Mammary epithelial cell (primary cell): ENCODE measurements at regions of chr9 and their contacts with region 1.

Region 1: DNA sequence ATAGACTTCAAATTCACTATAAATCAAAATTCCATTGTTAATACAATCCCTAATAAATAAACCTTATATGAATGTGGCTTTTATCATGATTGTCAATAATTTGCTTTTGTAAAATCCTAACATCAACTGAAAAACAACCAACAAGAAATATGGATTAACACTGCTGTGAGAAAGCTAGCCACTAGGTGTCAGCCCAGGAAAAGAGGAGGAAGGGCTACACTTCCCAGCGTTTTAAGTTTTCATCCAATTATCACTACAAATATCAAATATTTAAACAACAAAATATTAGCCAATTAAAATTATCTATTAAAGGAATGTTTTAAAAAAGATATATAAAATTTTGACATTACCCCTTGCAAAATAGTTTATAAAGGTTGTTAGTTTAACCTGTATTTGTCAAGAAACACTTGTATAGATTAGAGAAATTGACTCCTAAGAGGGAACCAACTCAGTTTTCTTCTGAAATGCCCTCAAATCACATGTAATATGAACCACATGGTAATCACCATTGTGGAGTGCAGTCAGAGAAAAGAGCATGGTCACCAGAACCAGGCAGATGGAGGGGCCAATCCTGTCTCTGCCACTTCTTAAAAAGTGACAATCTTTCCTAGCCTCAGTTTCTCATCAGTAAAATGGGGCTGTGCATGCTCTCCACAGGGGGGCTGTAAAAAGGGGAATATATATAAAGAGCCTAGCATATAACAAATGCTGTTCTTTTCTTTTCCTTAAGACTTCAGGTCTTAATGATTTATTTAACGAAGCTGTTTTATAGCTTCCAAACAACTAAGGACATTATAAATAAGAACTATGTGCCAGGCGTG is 188.2 kb downstream of the CRB2 start:
- DNase-seq: no peak
- H3K4me3 ChIP-seq: no peak overlapping the region
- H3K27ac ChIP-seq: no peak overlapping the region
- H3K4me1 ChIP-seq: no peaks in the 10 kb centered on the region
- H3K27me3 ChIP-seq: no peaks in the 10 kb centered on the region
- CTCF ChIP-seq: peak; percentile 84 to 86

Region 2: DNA sequence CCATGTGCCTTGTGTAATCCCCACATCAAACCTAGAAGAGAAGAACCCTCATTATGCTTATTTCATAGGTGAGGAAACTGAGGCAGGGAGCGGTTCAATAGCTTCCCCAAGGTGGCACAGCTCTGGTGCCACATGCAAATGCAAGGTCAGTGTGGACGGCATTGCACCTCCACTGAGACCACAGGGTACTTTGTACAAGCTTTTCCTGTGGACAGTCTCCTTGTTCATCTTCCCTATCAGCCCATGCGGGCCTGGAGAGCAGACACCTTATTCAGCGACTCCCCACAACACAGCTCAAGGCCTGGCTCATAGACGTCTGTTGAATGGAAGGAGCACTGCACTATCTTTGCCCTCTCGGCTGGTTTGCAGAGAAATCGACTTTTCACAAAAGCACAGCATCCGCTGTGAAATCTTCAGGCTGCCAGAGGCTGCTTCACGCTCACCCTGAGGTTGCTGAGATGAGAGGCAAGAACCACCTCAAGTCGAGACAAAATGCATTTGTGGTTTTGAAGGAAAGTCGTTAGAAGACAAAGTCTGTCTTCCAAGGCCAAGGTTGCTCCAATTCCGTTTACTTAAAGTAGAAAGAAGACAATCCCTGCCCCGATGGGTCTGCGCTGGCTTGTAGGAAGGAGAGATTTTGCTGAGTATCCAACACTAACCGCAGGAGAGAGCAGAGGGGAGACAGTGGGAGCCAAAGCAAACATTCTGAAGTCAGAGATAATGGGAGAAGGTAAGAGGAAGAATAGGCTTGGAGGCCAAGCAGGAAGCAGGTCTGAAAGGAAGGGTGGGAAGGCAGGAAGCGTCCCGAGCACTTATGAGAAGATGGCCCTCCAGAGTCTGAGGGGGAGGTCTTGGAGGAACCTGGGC is 241.6 kb before region 1 on chr9:
- CTCF ChIA-PET with region 1: no interaction called
- dilution Hi-C with region 1: no loop called
- in situ Hi-C with region 1: no loop called
- intact Hi-C with region 1: no loop called
- DNase-seq: no peak
- H3K4me3 ChIP-seq: no peak overlapping the region
- H3K27ac ChIP-seq: no peak overlapping the region
- H3K4me1 ChIP-seq: no peaks in the 10 kb centered on the region
- H3K27me3 ChIP-seq: no peaks in the 10 kb centered on the region
- CTCF ChIP-seq: no peak

Region 3: DNA sequence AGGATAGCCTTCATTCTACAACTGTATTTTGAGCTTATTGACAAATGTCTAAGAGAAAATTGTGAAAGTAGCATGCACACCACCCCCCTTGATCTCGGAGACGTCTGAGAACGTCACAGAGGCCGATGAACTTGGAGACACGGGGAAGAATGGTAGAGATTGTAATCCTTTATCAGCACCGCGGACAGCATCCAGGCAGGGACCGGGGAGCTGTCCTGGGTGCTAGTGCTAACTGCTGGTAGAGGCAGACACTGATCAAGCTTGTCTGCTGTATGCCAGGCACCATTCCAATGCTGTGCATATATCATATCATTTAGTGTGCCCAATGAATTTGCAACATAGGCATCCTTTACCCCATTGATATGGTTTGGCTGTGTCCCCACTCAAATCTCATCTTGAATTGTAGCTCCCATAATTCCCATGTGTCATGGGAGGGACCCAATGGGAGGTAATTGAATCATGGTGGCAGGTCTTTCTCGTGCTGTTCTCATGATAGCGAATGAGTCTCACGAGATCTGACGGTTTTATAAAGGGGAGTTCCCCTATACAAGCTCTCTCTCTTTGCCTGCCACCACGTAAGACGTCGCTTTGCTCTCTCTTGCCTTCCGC is 566.2 kb after region 1 on chr9:
- CTCF ChIA-PET with region 1: no interaction called
- dilution Hi-C with region 1: no loop called
- in situ Hi-C with region 1: no loop called
- intact Hi-C with region 1: loop called (anchors 2 kb)
- DNase-seq: peak; percentile 50
- H3K4me3 ChIP-seq: no peak overlapping the region
- H3K27ac ChIP-seq: no peak overlapping the region
- H3K4me1 ChIP-seq: no peaks in the 10 kb centered on the region
- H3K27me3 ChIP-seq: no peaks in the 10 kb centered on the region
- CTCF ChIP-seq: no peak